Activated CD8-positive, alpha-beta T cell treated with anti-CD3 and anti-CD28 coated beads, Interleukin-2, amount 10 ng/mL, durations not matched to agents 7 days and 5 days (primary cell): ENCODE measurements at regions of chr9 and their contacts with region 1.

Region 1: DNA sequence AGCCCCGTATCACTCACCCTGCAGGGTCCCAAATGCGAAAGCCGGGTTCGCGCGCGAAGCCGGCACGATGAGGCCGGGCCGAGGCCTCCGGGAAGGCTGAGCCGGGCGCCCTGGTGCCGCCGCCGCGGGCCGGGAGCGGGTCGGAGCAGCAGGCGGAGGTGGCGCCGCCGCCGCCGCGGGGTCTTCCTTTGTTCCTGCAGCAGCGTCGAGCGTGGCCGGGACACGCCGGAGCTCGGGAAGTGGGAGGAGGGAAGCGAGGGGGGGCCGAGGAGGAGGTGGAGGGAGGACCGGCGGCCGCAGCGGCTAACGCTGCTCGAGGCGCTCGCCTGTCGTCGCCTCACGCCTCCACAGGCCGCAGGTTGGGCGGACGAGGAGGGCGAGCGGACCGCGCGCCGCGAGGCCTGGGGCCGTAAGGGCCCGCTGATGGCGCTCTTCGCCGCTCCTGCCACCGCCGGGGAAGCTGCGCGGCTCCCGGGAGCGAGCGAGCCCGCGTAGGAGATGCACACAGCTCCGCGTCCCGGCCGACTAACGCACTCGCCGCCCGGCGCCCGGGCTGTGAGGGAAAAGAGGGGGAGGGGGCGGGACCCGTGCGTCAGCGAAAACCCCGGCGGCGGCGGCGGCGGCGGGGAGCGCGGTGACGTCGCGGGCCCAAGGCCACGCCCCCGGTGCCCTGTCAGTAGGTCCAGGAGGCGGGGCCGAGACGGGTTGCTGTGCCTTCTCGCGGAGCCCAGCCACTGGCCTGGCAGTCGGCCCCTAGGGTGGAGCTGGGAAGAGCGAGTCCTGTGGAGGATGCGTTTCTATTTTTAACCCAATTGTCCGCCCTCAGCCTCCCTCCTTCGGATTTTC is at the start of gene ZFAND5:
- DNase-seq: peak; percentile 94
- ATAC-seq: peak; percentile 82
- H3K4me3 Mint-ChIP-seq: peak within 1 kb of the TSS; percentile 82
- H3K27ac Mint-ChIP-seq: peak within 1 kb of the TSS; percentile 98
- H3K4me1 Mint-ChIP-seq: peaks cover 40% of the 10 kb centered on the region
- H3K27me3 Mint-ChIP-seq: no peaks in the 10 kb centered on the region
- total RNA-seq, gene ZFAND5: 64.1 to 69.0 TPM

Region 2: GRCh38 chr9:72280913-72281500 is 83.9 kb before region 1 on chr9:
- CTCF ChIA-PET with region 1: interaction called, 12 read pairs
- POLR2A ChIA-PET with region 1: interaction called, 3 read pairs
- DNase-seq: peak; percentile 80
- ATAC-seq: peak; percentile 90
- H3K4me3 Mint-ChIP-seq: no peak overlapping the region
- H3K27ac Mint-ChIP-seq: no peak overlapping the region
- H3K4me1 Mint-ChIP-seq: no peaks in the 10 kb centered on the region
- H3K27me3 Mint-ChIP-seq: peaks cover 4% of the 10 kb centered on the region

Region 3: DNA sequence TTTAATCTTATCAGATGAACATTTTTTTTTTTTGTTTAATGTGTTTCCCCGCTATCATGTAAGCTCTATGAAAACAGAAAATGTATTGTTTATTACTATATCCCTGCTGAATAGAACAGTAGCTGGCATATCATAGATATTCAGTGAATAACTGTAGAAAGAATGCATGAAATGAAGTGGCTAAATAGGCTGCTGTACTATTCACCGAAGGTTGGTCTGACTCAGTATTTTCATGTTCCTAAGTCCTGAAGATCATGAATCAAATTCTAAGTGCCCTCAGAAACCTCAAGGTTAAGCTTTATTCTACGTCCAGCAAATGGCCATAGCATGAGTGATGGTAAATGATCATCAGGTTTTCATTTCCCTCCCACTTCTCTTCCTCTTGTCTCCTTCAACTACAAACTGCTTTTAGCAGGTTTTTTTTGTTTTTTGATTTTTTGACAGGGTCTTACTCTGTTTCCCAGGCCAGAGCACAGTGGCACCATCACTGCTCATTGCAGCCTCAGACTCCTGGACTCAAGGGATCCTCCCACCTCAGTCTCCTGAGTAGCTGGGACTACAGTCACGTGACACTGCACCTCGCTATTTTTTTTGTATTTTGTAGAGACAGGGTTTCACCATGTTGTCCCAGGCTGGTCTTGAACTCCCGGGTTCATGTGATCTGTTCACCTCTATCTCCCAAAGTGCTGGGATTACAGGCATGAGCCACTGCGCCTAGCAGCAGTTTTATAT is 19.2 kb after region 1 on chr9:
- CTCF ChIA-PET with region 1: interaction called, 9 read pairs
- POLR2A ChIA-PET with region 1: interaction called, 10 read pairs
- DNase-seq: no peak
- ATAC-seq: no peak
- H3K4me3 Mint-ChIP-seq: no peak overlapping the region
- H3K27ac Mint-ChIP-seq: no peak overlapping the region
- H3K4me1 Mint-ChIP-seq: peaks cover 6% of the 10 kb centered on the region
- H3K27me3 Mint-ChIP-seq: no peaks in the 10 kb centered on the region

Region 4: GRCh38 chr9:72424131-72424530 is 59.2 kb after region 1 on chr9:
- CTCF ChIA-PET with region 1: no interaction called
- POLR2A ChIA-PET with region 1: no interaction called
- DNase-seq: no peak
- ATAC-seq: no peak
- H3K4me3 Mint-ChIP-seq: no peak overlapping the region
- H3K27ac Mint-ChIP-seq: no peak overlapping the region
- H3K4me1 Mint-ChIP-seq: no peaks in the 10 kb centered on the region
- H3K27me3 Mint-ChIP-seq: peaks cover 12% of the 10 kb centered on the region

Region 5: GRCh38 chr9:72443855-72444254 is 79.0 kb after region 1 on chr9:
- CTCF ChIA-PET with region 1: interaction called, 13 read pairs
- POLR2A ChIA-PET with region 1: interaction called, 19 read pairs
- DNase-seq: peak; percentile 29
- ATAC-seq: peak; percentile 71
- H3K4me3 Mint-ChIP-seq: no peak overlapping the region
- H3K27ac Mint-ChIP-seq: peak overlapping the region; percentile 55
- H3K4me1 Mint-ChIP-seq: peaks cover 33% of the 10 kb centered on the region
- H3K27me3 Mint-ChIP-seq: peaks cover 9% of the 10 kb centered on the region

Region 6: GRCh38 chr9:72526901-72527800 is 162.2 kb after region 1 on chr9:
- CTCF ChIA-PET with region 1: interaction called, 4 read pairs
- POLR2A ChIA-PET with region 1: interaction called, 13 read pairs
- DNase-seq: peak; percentile 81
- ATAC-seq: peak; percentile 99
- H3K4me3 Mint-ChIP-seq: peak overlapping the region; percentile 62
- H3K27ac Mint-ChIP-seq: peak overlapping the region; percentile 84
- H3K4me1 Mint-ChIP-seq: peaks cover 28% of the 10 kb centered on the region
- H3K27me3 Mint-ChIP-seq: no peaks in the 10 kb centered on the region

Region 7: DNA sequence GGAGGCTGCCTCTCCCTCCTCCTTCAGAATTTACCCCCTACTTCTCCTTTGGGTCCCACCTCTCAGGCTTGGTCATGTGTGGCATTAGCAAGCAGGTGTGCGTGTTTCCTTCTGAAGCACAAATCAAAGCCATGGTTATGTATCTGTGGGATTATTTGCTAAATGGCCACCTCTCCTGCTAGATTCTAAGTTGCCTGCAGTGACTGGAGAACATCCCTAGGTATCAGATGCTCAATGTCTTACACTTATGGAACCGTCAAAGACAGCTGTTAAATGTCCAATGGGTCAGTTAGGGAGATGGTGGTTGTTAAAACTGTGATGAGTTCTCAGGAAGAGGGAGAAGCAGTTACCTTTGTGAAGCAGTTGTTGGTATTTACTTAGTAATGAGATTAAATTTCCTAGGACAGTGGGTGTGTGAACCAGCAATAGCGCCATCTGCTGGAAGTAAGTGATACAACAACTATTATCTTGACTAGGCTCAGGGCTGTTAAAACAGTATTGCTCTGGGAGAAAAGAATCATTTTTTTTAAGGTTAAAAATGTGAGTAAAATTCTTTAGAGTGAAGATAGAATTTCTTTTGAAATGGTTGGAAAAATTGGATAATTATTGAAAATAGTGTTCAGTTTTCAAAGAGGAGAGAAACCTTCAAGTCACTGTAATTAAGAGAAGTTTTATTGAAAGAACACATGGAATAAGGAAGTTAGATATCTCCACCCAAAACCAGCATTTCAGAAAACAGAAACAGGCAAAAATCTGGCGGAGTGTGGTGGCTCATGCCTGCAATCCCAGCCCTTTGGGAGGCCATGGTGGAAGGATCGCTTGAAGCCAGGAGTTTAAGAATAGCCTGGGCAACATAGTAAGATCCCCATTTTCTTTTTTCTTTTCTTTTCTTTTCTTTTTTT is 227.9 kb after region 1 on chr9:
- CTCF ChIA-PET with region 1: interaction called, 13 read pairs
- POLR2A ChIA-PET with region 1: interaction called, 12 read pairs
- DNase-seq: peak; percentile 55
- ATAC-seq: peak; percentile 75
- H3K4me3 Mint-ChIP-seq: no peak overlapping the region
- H3K27ac Mint-ChIP-seq: no peak overlapping the region
- H3K4me1 Mint-ChIP-seq: peaks cover 31% of the 10 kb centered on the region
- H3K27me3 Mint-ChIP-seq: no peaks in the 10 kb centered on the region

Region 8: GRCh38 chr9:72661401-72662135 is 296.7 kb after region 1 on chr9:
- CTCF ChIA-PET with region 1: no interaction called
- POLR2A ChIA-PET with region 1: no interaction called
- DNase-seq: no peak
- ATAC-seq: no peak
- H3K4me3 Mint-ChIP-seq: no peak overlapping the region
- H3K27ac Mint-ChIP-seq: no peak overlapping the region
- H3K4me1 Mint-ChIP-seq: no peaks in the 10 kb centered on the region
- H3K27me3 Mint-ChIP-seq: no peaks in the 10 kb centered on the region